ENCODE measurements at regions of chr17 and their contacts with region 1.

Region 1: DNA sequence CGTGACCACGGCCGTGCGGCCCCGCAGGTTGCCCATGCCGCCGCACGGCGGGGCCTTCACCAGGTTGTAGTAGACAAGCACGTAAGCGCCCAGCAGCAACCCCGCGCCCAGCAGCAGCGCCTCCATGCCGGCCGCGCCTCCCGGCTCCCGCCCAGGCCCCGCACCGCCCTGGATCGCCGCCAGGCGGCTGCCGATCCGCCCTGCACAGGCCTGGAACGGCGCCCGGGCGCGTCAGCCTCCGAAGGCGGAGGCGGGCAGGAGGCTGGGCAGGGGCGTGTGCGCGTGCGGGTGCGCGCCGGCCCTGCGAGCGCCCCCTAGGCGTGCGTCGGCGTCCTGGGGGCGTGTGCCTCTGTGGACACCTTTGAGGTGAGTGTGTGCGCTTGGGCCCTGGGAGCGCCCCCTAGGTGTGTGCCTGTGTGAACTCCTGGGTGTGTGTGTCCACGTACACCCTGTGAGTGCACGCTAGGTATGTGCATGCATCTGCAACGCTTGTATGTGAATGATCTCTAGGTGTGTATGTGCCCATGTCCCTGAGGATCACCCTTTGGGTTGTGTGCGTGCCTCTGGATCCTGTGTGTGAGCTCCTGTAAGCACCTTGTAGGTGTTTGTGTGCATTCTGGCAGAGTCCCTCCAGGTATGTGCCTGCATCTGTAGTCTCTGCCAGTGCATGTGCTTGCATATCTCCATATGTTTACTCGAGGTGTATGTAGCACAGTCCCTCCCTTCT is at the start of gene DHRS13:
- DNase-seq: peak; percentile 91
- ATAC-seq: peak; percentile 91
- H3K4me3 ChIP-seq: peak within 1 kb of the TSS; percentile 63 to 89 (median 85)
- H3K27ac ChIP-seq: peak within 1 kb of the TSS; percentile 73
- H3K4me1 ChIP-seq: peaks cover 37% of the 10 kb centered on the region
- H3K27me3 ChIP-seq: no peaks in the 10 kb centered on the region; a peak in 1 of 5 replicates
- CTCF ChIP-seq: peak; percentile 95
- EP300 ChIP-seq: peak in 1 of 2 experiments; percentile 40; a peak in 1 of 4 replicates
- POLR2A ChIP-seq: peak; percentile 43 to 54; a peak in 3 of 4 replicates
- RAD21 ChIP-seq: peak; percentile 93
- total RNA-seq, gene DHRS13: 7.6 and 12.6 TPM in 2 replicates

Region 2: DNA sequence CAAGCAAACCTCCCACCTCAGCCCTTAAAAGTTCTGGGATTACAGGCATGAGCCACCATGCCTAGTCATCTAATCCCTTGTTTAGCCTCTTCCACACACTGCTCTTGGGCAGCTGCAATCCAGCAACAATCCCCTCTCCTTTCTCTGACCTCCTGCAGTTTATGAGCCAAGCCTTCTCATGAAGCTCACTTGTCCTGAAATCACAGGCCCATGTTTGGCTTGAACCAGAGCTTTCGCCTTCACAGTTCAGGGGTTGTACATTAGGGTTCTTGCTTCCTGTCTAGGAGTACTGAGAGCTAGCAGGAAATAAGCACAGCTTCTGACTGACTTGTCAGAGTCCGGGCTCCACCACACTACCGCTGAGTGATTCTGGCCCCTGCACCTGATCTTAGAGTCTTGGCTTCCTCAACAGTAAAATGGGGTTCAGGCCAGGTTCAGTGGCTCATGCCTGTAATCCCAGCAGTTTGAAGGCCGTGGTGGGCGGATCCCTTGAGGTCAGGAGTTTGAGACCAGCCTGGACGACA is 31.9 kb before region 1 on chr17:
- CTCF ChIA-PET with region 1: no interaction called
- POLR2A ChIA-PET with region 1: no interaction called
- in situ Hi-C with region 1: no loop called
- intact Hi-C with region 1: no loop called
- DNase-seq: no peak
- ATAC-seq: peak; percentile 70
- H3K4me3 ChIP-seq: no peak overlapping the region
- H3K27ac ChIP-seq: no peak overlapping the region
- H3K4me1 ChIP-seq: peaks cover 19% of the 10 kb centered on the region
- H3K27me3 ChIP-seq: peaks cover 0 to 1% of the 10 kb centered on the region in 2 experiments; a peak in 1 of 5 replicates
- CTCF ChIP-seq: no peak
- EP300 ChIP-seq: no peak
- POLR2A ChIP-seq: no peak
- RAD21 ChIP-seq: no peak

Region 3: DNA sequence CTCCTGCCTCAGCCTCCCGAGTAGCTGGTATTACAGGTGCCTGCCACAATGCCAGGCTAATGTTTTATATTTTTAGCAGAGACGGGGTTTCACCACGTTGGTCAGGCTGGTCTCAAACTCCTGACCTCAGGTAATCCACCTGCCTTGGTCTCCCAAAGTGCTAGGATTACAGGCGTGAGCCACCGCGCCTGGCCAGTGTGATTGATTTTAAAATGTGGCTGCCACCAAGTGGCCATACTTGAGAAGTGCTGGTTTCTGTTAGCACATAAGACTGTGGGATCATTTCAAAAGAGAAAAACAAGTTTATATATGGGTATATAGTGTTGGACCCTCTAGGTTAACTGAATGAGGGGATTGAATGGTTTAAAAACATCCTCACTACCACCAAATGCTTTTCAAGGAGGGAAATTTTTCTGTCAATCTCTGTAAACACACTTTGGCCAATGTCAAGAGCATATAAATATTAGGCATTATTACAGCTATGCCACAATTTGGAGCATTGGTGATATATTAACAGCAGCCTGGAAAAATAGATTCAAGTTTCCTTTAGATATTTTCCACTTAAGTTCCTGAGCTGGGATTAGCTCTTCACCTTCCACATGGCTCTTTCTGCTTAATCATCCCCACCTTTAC is 13.4 kb after region 1 on chr17:
- CTCF ChIA-PET with region 1: interaction called, 36 read pairs
- POLR2A ChIA-PET with region 1: interaction called, 3 read pairs
- in situ Hi-C with region 1: no loop called
- intact Hi-C with region 1: loop called (anchors 2 kb)
- DNase-seq: peak; percentile 38
- ATAC-seq: peak; percentile 78
- H3K4me3 ChIP-seq: no peak overlapping the region
- H3K27ac ChIP-seq: no peak overlapping the region
- H3K4me1 ChIP-seq: peaks cover 19% of the 10 kb centered on the region
- H3K27me3 ChIP-seq: no peaks in the 10 kb centered on the region
- CTCF ChIP-seq: peak; percentile 79
- EP300 ChIP-seq: no peak
- POLR2A ChIP-seq: no peak
- RAD21 ChIP-seq: no peak

Region 4: GRCh38 chr17:29059281-29059680 is 156.3 kb after region 1 on chr17:
- CTCF ChIA-PET with region 1: no interaction called
- POLR2A ChIA-PET with region 1: no interaction called
- in situ Hi-C with region 1: no loop called
- intact Hi-C with region 1: no loop called
- DNase-seq: peak; percentile 28
- ATAC-seq: no peak
- H3K4me3 ChIP-seq: no peak overlapping the region
- H3K27ac ChIP-seq: no peak overlapping the region
- H3K4me1 ChIP-seq: no peaks in the 10 kb centered on the region
- H3K27me3 ChIP-seq: no peaks in the 10 kb centered on the region
- CTCF ChIP-seq: no peak
- EP300 ChIP-seq: no peak
- POLR2A ChIP-seq: no peak
- RAD21 ChIP-seq: no peak

Measured in HepG2 (cell line).